CD8-positive, alpha-beta memory T cell (primary cell): ENCODE measurements at regions of chr11 and their contacts with region 1.

Region 1: GRCh38 chr11:65888163-65888814 is at the start of gene FIBP:
- DNase-seq: peak; percentile 89 to 98 (median 95)
- H3K4me3 ChIP-seq: peak within 1 kb of the TSS; percentile 94
- H3K4me3 Mint-ChIP-seq: peak within 1 kb of the TSS; percentile 83 to 97 (median 92)
- H3K27ac ChIP-seq: peak within 1 kb of the TSS; percentile 87
- H3K27ac Mint-ChIP-seq: peak within 1 kb of the TSS; percentile 84 to 100 (median 96)
- H3K4me1 ChIP-seq: peaks cover 48% of the 10 kb centered on the region
- H3K4me1 Mint-ChIP-seq: peaks cover 54 to 71% (median 69%) of the 10 kb centered on the region in 3 donors
- H3K27me3 ChIP-seq: no peaks in the 10 kb centered on the region
- H3K27me3 Mint-ChIP-seq: no peaks in the 10 kb centered on the region
- total RNA-seq, gene FIBP: 121 to 123 TPM

Region 2: DNA sequence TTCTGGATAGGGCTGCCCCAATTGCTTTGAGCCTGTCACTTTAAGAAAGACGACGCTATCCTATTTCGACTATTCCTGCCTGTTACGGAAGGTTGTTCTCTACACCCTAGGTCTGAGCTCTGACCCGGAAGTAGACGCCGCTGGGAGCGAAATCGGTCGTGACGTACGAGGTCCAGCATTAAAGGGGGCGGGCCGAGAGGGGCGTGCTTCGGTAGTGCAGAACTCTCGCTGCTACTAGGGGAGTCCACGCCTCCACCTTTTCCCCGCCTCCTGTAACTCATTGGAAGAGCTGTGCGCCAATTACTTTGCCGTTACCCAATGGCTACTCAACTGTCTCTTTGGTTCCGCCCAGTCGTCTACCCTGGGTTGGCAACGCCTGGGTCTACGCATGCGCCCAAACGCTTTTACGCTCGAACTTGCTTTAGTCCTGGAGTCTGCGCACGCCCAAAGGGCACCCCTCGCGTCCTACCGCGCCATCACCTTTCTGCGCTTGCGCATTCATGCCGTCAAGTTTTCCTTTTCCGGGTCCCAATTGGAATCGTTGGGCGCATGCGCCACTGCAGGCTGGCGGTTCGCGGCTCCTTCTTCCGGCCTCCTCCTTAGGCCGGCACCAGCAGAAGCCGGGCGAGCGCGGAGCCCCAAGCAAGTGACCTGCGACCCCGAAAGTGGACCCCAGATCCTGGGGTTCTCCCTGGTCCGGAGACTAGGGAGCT is 272.9 kb before region 1 on chr11 and contains the start of gene PCNX3:
- CTCF ChIA-PET with region 1: no interaction called
- POLR2A ChIA-PET with region 1: interaction called, 10 read pairs
- DNase-seq: peak; percentile 100
- H3K4me3 ChIP-seq: peak within 1 kb of the TSS; percentile 93
- H3K4me3 Mint-ChIP-seq: peak within 1 kb of the TSS; percentile 89 to 99 (median 97)
- H3K27ac ChIP-seq: peak within 1 kb of the TSS; percentile 91
- H3K27ac Mint-ChIP-seq: peak within 1 kb of the TSS; percentile 88 to 100 (median 99)
- H3K4me1 ChIP-seq: peaks cover 44% of the 10 kb centered on the region
- H3K4me1 Mint-ChIP-seq: peaks cover 31 to 66% (median 37%) of the 10 kb centered on the region in 3 donors
- H3K27me3 ChIP-seq: no peaks in the 10 kb centered on the region
- H3K27me3 Mint-ChIP-seq: no peaks in the 10 kb centered on the region
- total RNA-seq, gene PCNX3: 46.4 to 53.1 TPM

Region 3: DNA sequence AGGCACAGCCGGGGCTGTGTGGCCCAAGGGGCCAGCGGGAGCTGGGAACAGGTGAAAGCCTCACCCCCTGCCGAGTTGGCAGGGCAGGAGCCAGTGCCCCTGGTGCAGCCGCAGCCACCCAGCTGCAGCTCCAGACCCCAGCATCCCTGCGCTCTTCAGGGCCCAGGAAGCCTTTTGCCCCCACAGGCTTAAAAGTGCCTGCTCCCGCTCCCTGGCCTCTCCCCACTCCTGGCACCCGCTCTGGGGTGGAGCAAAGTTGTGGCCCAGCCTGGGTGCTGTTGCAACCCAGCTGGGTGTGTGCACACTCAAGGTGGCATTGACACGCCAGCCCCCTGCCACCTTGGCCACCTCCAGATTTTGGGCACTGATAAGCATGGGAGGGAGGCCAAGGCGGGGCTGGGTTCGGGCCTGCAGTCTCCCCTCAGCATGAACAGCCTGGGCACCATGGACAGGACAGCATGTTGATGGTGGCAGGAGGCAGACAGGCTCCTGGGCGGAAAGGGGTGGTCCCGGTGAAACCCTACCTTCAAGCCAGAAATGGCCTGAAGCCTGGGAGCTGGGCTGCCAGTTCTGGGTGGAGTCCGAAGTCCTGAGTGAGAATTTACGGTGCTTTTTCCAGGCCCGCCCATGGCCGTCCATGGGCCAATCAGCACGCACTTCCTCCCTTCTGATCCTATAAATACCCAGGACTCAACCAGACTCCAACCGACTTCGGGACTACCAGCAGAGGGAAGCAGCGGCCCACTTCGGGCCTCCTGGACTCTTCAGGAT is 144.2 kb before region 1 on chr11:
- CTCF ChIA-PET with region 1: no interaction called
- POLR2A ChIA-PET with region 1: no interaction called
- DNase-seq: no peak
- H3K4me3 ChIP-seq: no peak overlapping the region
- H3K4me3 Mint-ChIP-seq: no peak overlapping the region
- H3K27ac ChIP-seq: no peak overlapping the region
- H3K27ac Mint-ChIP-seq: no peak overlapping the region
- H3K4me1 ChIP-seq: no peaks in the 10 kb centered on the region
- H3K4me1 Mint-ChIP-seq: no peaks in the 10 kb centered on the region
- H3K27me3 ChIP-seq: no peaks in the 10 kb centered on the region
- H3K27me3 Mint-ChIP-seq: peaks cover 18 to 32% of the 10 kb centered on the region in 2 donors

Region 4: DNA sequence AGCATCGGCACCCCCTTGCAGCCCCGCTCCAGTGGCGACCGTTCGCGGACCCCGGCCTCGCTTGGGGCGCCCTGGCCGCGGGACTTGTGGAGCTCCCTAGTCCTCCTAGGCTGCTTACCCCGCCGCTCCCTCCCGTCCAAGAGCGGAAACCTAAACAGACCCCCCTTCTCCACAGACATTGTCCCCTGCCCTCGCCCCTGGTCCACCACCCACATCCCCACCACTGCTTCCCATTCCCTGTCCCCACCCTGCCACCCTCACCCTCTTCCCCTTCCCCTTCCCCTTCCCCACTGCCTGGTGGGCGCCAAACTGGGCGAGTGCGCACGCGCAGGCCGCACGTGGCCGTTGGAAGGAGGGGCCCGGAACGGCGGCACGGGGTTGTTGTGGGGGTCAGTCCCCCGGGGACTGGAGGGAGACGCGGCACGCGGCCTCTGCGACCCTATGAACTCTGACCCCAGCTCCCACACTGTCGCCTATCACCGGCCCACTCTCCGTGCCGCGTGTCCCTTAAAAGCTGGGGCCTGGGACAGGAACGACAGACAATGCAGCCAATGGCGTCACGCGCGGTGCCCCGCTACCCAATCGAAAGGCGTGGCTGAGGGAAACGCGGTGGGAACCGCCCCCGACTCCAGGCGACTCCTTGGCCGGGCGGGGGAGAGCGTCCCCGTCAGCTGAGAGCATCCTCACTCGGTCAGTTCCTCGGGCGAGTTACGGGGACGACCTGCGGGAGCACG is 54.8 kb before region 1 on chr11 and contains the start of gene SNX32:
- CTCF ChIA-PET with region 1: interaction called, 12 read pairs
- POLR2A ChIA-PET with region 1: interaction called, 3 read pairs
- DNase-seq: peak; percentile 90 to 94 (median 91)
- H3K4me3 ChIP-seq: peak within 1 kb of the TSS; percentile 57
- H3K4me3 Mint-ChIP-seq: no peak within 1 kb of the TSS
- H3K27ac ChIP-seq: no peak within 1 kb of the TSS
- H3K27ac Mint-ChIP-seq: peak within 1 kb of the TSS in 6 of 8 donors; percentile 15 to 79 (median 67)
- H3K4me1 ChIP-seq: peaks cover 16% of the 10 kb centered on the region
- H3K4me1 Mint-ChIP-seq: peaks cover 8 to 14% (median 13%) of the 10 kb centered on the region in 3 donors
- H3K27me3 ChIP-seq: no peaks in the 10 kb centered on the region
- H3K27me3 Mint-ChIP-seq: peaks cover 0 to 2% of the 10 kb centered on the region in 2 donors
- total RNA-seq, gene SNX32: 2.0 to 2.8 TPM

Region 5: GRCh38 chr11:65900125-65900898 is 12.0 kb after region 1 on chr11 and contains the start of gene FOSL1:
- CTCF ChIA-PET with region 1: interaction called, 79 read pairs
- POLR2A ChIA-PET with region 1: interaction called, 32 read pairs
- DNase-seq: peak; percentile 90 to 95 (median 93)
- H3K4me3 ChIP-seq: peak within 1 kb of the TSS; percentile 50
- H3K4me3 Mint-ChIP-seq: peak within 1 kb of the TSS; percentile 53 to 83 (median 58)
- H3K27ac ChIP-seq: peak within 1 kb of the TSS; percentile 62
- H3K27ac Mint-ChIP-seq: peak within 1 kb of the TSS in 7 of 8 donors; percentile 36 to 92 (median 88)
- H3K4me1 ChIP-seq: peaks cover 24% of the 10 kb centered on the region
- H3K4me1 Mint-ChIP-seq: peaks cover 8 to 13% (median 11%) of the 10 kb centered on the region in 3 donors
- H3K27me3 ChIP-seq: peaks cover 6% of the 10 kb centered on the region
- H3K27me3 Mint-ChIP-seq: no peaks in the 10 kb centered on the region
- total RNA-seq, gene FOSL1: 26.4 to 26.9 TPM

Region 6: GRCh38 chr11:65927904-65928397 is 39.7 kb after region 1 on chr11:
- CTCF ChIA-PET with region 1: interaction called, 60 read pairs
- POLR2A ChIA-PET with region 1: interaction called, 11 read pairs
- DNase-seq: peak; percentile 59 to 88 (median 78)
- H3K4me3 ChIP-seq: peak overlapping the region; percentile 63
- H3K4me3 Mint-ChIP-seq: peak overlapping the region; percentile 55 to 88 (median 77)
- H3K27ac ChIP-seq: peak overlapping the region; percentile 70
- H3K27ac Mint-ChIP-seq: peak overlapping the region; percentile 89 to 99 (median 96)
- H3K4me1 ChIP-seq: peaks cover 22% of the 10 kb centered on the region
- H3K4me1 Mint-ChIP-seq: peaks cover 23 to 45% (median 32%) of the 10 kb centered on the region in 3 donors
- H3K27me3 ChIP-seq: no peaks in the 10 kb centered on the region
- H3K27me3 Mint-ChIP-seq: no peaks in the 10 kb centered on the region

Region 7: GRCh38 chr11:65988791-65989592 is 100.7 kb after region 1 on chr11:
- CTCF ChIA-PET with region 1: interaction called, 87 read pairs
- POLR2A ChIA-PET with region 1: interaction called, 4 read pairs
- DNase-seq: peak; percentile 80 to 92 (median 89)
- H3K4me3 ChIP-seq: no peak overlapping the region
- H3K4me3 Mint-ChIP-seq: no peak overlapping the region
- H3K27ac ChIP-seq: no peak overlapping the region
- H3K27ac Mint-ChIP-seq: peak overlapping the region in 5 of 8 donors; percentile 37 to 90 (median 74)
- H3K4me1 ChIP-seq: no peaks in the 10 kb centered on the region
- H3K4me1 Mint-ChIP-seq: peaks cover 5 to 7% (median 6%) of the 10 kb centered on the region in 3 donors
- H3K27me3 ChIP-seq: no peaks in the 10 kb centered on the region
- H3K27me3 Mint-ChIP-seq: no peaks in the 10 kb centered on the region